CD8-positive, alpha-beta T cell (primary cell): ENCODE measurements at regions of chr13 and their contacts with region 1.

Region 1: DNA sequence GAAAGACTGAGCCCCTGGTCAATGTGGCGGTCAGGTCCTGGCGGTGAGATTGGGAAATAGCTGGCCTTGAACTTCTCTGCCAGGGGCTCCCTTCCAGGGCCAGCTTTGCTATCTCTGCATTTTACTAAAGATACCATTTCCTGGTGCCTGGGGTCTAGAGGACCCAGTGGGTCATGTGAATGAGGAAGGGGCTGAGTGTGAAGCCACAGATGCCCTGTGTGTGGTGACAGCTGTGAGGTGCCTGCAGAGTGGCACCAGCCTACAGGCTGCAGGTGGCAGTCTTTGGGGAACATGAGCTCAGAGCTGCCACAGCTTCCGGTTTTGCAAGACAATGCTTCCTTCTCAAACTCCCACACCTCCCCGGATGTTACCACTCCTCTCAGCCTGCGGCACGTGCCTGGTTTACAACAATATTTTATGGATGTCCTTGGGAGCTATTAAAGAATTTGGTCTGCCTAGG is 5.2 kb upstream of the MLNR start:
- DNase-seq: peak in 8 of 9 experiments; percentile 11 to 68 (median 45)
- ATAC-seq: peak; percentile 89
- H3K4me3 ChIP-seq: no peak overlapping the region
- H3K4me3 Mint-ChIP-seq: no peak overlapping the region
- H3K27ac ChIP-seq: no peak overlapping the region
- H3K27ac Mint-ChIP-seq: no peak overlapping the region
- H3K4me1 ChIP-seq: peaks cover 8% of the 10 kb centered on the region
- H3K4me1 Mint-ChIP-seq: peaks cover 15% of the 10 kb centered on the region
- H3K27me3 ChIP-seq: peaks cover 15 to 19% of the 10 kb centered on the region in 2 experiments
- H3K27me3 Mint-ChIP-seq: peaks cover 32% of the 10 kb centered on the region
- CTCF ChIP-seq: peak; percentile 39

Region 2: GRCh38 chr13:49256841-49257240 is 41.9 kb after region 1 on chr13:
- CTCF ChIA-PET with region 1: no interaction called
- POLR2A ChIA-PET with region 1: no interaction called
- intact Hi-C with region 1: loop called in 1 of 2 experiments (anchors 5 kb)
- DNase-seq: no peak
- ATAC-seq: no peak
- H3K4me3 ChIP-seq: no peak overlapping the region
- H3K4me3 Mint-ChIP-seq: no peak overlapping the region
- H3K27ac ChIP-seq: no peak overlapping the region
- H3K27ac Mint-ChIP-seq: peak overlapping the region; percentile 53
- H3K4me1 ChIP-seq: peaks cover 8% of the 10 kb centered on the region
- H3K4me1 Mint-ChIP-seq: peaks cover 44% of the 10 kb centered on the region
- H3K27me3 ChIP-seq: no peaks in the 10 kb centered on the region
- H3K27me3 Mint-ChIP-seq: no peaks in the 10 kb centered on the region
- CTCF ChIP-seq: no peak